ENCODE measurements at regions of chr22 and their contacts with region 1.

Region 1: DNA sequence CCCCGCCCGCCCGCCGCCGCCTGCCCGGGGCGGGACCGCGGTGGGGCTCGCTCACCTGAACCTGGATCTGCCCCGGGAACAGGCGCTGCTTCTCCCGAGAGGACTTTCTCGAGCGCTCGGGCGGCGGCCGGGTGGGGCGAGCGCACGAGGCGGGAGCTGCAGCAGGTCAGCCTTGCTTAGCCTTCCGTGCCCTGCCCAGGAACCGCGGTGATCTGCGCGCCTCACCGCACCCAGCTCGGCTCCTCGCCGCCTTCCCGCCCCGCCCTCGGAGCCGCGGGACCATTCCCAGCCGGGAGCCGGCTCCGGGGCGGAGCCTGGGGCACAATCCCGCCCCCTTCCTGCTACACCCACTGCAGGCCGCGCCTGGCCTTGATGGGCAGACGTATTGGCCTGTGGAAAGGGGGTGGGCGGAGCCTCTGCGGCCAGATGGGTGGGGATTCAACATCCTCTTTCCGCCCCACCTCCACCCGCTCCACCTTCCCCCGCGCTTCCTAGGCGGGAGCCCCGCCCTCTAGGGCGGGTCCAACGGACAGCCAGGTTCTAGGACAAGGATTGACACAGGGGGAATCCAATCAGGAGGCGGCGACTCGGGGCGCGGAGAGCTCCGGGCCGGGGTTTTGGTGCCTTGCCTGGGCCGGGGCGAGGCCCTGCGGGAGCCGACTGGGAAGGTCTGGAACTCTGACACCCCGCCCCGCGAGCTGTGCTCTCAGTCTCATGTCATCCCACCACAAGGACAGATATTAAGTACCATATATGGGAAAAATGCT is at the start of gene MYH9:
- DNase-seq: peak; percentile 100
- H3K4me3 Mint-ChIP-seq: peak within 1 kb of the TSS; percentile 91
- H3K27ac Mint-ChIP-seq: peak within 1 kb of the TSS; percentile 94
- H3K4me1 Mint-ChIP-seq: peaks cover 29% of the 10 kb centered on the region
- H3K27me3 Mint-ChIP-seq: no peaks in the 10 kb centered on the region
- CTCF ChIP-seq: no peak
- total RNA-seq, gene MYH9: 643 and 653 TPM in 2 replicates

Region 2: DNA sequence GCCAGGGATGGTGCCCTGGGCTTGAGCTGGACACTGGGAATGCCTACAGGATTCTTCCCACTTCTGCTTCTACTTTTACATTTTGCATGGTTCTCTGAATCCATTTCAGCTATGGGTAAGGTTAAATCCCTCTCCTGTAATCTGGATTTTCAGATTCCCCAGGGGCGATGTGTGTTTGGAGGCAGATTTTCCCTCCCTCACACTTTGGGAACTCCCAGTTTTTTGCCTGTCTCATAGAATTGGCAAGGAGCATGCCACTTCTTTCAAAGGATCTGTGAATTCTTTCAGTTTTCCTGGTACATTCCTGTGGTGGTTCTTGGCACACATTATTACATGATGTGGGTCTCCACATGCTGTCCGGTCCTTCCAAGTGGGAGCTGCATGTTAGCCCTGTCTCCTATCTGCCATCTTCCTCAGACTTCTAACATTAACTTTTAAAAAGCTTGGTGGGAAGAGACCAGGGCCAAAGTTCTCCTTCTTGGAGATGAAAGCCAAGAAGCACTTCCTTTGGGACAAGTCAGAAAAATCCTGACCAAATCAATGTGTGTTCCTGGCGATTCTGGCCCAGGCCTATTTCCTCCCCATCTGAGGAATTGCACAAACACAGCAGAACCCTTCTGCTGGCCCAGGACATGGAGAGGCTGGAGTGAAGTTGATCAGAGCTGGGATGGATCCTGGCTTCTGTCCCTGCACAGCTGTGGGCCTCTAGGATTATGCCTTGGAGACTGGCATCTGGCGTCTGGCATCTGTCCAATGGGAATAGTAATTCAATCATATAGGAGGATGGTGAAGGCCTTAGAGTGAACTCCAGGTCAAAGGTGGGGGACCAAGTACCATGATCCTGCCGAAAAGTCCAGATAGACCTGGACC is 143.2 kb before region 1 on chr22:
- CTCF ChIA-PET with region 1: no interaction called
- POLR2A ChIA-PET with region 1: no interaction called
- intact Hi-C with region 1: no loop called
- DNase-seq: no peak
- H3K4me3 Mint-ChIP-seq: no peak overlapping the region
- H3K27ac Mint-ChIP-seq: no peak overlapping the region
- H3K4me1 Mint-ChIP-seq: no peaks in the 10 kb centered on the region
- H3K27me3 Mint-ChIP-seq: no peaks in the 10 kb centered on the region
- CTCF ChIP-seq: no peak

Region 3: GRCh38 chr22:36277482-36278291 is 110.2 kb before region 1 on chr22:
- CTCF ChIA-PET with region 1: no interaction called
- POLR2A ChIA-PET with region 1: no interaction called
- intact Hi-C with region 1: no loop called
- DNase-seq: peak; percentile 66
- H3K4me3 Mint-ChIP-seq: no peak overlapping the region
- H3K27ac Mint-ChIP-seq: peak overlapping the region; percentile 19
- H3K4me1 Mint-ChIP-seq: peaks cover 6% of the 10 kb centered on the region
- H3K27me3 Mint-ChIP-seq: no peaks in the 10 kb centered on the region
- CTCF ChIP-seq: peak; percentile 68

Region 4: DNA sequence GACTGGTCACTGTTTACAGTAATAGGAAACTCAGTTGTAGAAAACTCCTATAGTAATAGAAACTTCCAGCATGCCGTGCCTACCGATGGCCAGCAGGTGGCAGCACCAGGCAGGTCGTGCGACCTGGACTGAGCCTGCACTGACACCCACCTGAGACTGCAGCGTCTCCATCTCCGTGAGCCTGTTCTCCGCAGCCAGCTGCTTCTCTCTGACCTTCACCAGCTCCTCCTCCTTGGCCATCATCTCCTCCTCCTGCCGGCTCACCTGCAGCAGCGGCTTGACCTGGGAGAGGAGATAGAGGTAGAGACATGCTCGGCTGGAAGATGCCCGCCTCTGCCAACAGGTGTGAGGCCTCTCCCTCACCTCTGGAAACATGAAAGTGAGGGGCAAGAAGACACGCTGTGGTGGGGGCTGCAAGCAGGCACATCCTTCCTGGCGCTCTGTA is 86.5 kb before region 1 on chr22:
- CTCF ChIA-PET with region 1: interaction called, 6 read pairs
- POLR2A ChIA-PET with region 1: interaction called, 10 read pairs
- intact Hi-C with region 1: loop called (anchors 1 kb)
- DNase-seq: peak; percentile 73
- H3K4me3 Mint-ChIP-seq: no peak overlapping the region
- H3K27ac Mint-ChIP-seq: no peak overlapping the region
- H3K4me1 Mint-ChIP-seq: peaks cover 7% of the 10 kb centered on the region
- H3K27me3 Mint-ChIP-seq: no peaks in the 10 kb centered on the region
- CTCF ChIP-seq: peak; percentile 94

Region 5: DNA sequence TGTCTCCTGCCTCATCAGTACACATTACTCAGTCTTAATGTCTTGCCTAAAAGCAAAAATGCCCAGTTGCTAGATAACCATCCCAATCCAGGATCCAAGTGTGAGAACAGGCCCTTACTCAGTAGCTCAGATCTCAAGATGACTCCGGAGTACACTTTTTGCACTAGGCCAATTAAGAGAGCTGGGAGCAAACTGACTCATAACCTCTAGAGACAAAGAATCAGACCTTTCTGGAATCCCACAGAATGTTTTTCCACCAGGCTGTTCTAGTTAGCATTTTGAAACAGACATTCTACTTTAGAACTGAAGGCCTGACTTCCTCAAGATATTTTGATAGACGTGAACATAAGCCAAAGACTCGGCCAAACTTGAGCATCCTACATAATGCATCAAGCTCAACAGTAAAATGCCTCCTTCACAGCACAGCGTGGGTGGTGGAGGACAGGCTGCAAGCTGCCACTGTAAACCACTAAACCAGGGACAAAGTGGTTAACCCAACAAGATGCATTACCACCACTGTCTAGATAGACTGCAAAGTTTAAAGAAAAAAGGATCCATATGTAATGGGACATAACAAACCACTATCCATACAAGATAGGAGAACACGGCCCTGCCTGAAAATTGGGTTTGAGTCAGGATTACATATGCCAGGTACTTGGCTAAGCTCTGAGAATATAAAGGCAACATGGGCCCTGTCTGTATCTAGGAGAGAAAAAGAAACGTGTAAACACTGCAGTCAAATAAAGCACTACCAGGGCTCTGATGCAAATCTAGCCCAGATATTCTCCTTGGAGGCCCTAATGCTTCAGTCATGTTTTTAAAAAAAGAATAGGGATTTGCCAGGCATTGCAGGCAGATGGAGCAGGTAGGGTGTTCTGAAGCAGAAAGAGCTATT is 48.5 kb before region 1 on chr22:
- CTCF ChIA-PET with region 1: no interaction called
- POLR2A ChIA-PET with region 1: interaction called, 120 read pairs
- intact Hi-C with region 1: no loop called
- DNase-seq: no peak
- H3K4me3 Mint-ChIP-seq: no peak overlapping the region
- H3K27ac Mint-ChIP-seq: peak overlapping the region; percentile 83
- H3K4me1 Mint-ChIP-seq: peaks cover 27% of the 10 kb centered on the region
- H3K27me3 Mint-ChIP-seq: no peaks in the 10 kb centered on the region
- CTCF ChIP-seq: no peak

Region 6: DNA sequence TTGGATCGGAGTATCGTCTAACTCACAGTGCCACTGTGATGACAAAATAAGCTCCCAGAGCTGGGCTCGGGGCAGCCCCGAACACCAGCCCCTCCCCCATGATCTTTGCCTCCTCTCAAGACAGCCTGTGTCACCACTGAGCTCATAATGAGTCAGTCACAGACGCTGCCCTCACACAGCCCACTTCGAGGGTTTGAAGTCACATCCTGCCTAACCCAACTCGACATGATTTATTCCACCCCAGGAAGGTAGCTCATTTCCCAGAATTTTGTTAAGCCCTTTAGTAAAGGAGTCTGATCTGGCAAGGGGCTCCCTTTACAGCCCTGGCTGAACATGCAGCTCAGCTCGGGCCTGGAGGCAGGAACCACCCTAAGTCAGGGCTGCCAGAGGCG is 22.9 kb before region 1 on chr22:
- CTCF ChIA-PET with region 1: interaction called, 3 read pairs
- POLR2A ChIA-PET with region 1: interaction called, 88 read pairs
- intact Hi-C with region 1: loop called (anchors 2 kb)
- DNase-seq: peak; percentile 93
- H3K4me3 Mint-ChIP-seq: peak overlapping the region; percentile 8
- H3K27ac Mint-ChIP-seq: peak overlapping the region; percentile 87
- H3K4me1 Mint-ChIP-seq: peaks cover 54% of the 10 kb centered on the region
- H3K27me3 Mint-ChIP-seq: no peaks in the 10 kb centered on the region
- CTCF ChIP-seq: no peak

Region 7: GRCh38 chr22:36377022-36377631 is 10.8 kb before region 1 on chr22:
- CTCF ChIA-PET with region 1: interaction called, 14 read pairs
- POLR2A ChIA-PET with region 1: interaction called, 88 read pairs
- intact Hi-C with region 1: no loop called
- DNase-seq: no peak
- H3K4me3 Mint-ChIP-seq: no peak overlapping the region
- H3K27ac Mint-ChIP-seq: no peak overlapping the region
- H3K4me1 Mint-ChIP-seq: peaks cover 23% of the 10 kb centered on the region
- H3K27me3 Mint-ChIP-seq: no peaks in the 10 kb centered on the region
- CTCF ChIP-seq: no peak

Region 8: GRCh38 chr22:36415415-36416168 is 27.7 kb after region 1 on chr22:
- CTCF ChIA-PET with region 1: interaction called, 4 read pairs
- POLR2A ChIA-PET with region 1: interaction called, 57 read pairs
- intact Hi-C with region 1: no loop called
- DNase-seq: no peak
- H3K4me3 Mint-ChIP-seq: no peak overlapping the region
- H3K27ac Mint-ChIP-seq: no peak overlapping the region
- H3K4me1 Mint-ChIP-seq: peaks cover under 1% of the 10 kb centered on the region
- H3K27me3 Mint-ChIP-seq: no peaks in the 10 kb centered on the region
- CTCF ChIP-seq: no peak

Region 9: DNA sequence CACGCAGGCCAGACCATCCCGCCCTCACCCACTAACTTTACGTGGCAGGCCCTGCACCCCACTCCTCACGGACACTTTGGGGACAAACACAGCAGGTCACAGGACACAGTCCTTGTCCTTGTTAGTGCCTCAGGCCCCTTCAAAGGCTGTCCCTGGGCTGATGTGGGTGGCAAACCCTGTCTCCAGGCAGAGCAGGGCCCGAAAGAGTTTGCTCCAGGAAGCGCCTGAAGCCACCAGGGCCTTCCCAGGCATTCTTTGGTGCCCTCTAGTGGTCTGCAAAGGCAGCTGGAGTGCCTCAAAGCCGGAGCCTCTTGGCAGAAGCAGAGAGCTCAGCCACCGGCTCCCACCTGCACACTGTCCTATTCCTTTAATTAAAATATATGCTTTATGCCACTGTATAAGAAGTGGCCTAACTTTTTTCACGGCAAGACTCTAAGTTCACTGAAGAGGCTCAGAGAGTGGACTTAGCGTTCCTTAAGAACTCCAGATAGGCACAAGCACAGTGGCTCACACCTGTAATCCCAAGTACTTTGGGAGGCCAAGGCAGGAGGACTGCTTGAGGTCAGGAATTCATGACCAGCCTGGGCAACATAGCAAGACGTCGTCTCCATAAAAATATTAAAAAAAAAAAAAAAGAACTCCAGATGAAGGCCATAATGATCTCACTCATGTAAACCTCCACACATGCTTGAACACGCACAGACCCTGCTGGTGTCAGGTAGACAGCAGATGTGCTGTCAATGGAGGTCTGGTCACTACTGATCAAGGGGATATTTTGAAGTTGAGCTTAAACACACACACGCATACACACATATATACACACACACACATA is 82.4 kb after region 1 on chr22:
- CTCF ChIA-PET with region 1: interaction called, 4 read pairs
- POLR2A ChIA-PET with region 1: interaction called, 100 read pairs
- intact Hi-C with region 1: loop called (anchors 1 kb)
- DNase-seq: peak; percentile 85
- H3K4me3 Mint-ChIP-seq: no peak overlapping the region
- H3K27ac Mint-ChIP-seq: peak overlapping the region; percentile 51
- H3K4me1 Mint-ChIP-seq: peaks cover 48% of the 10 kb centered on the region
- H3K27me3 Mint-ChIP-seq: no peaks in the 10 kb centered on the region
- CTCF ChIP-seq: peak; percentile 91

Region 10: DNA sequence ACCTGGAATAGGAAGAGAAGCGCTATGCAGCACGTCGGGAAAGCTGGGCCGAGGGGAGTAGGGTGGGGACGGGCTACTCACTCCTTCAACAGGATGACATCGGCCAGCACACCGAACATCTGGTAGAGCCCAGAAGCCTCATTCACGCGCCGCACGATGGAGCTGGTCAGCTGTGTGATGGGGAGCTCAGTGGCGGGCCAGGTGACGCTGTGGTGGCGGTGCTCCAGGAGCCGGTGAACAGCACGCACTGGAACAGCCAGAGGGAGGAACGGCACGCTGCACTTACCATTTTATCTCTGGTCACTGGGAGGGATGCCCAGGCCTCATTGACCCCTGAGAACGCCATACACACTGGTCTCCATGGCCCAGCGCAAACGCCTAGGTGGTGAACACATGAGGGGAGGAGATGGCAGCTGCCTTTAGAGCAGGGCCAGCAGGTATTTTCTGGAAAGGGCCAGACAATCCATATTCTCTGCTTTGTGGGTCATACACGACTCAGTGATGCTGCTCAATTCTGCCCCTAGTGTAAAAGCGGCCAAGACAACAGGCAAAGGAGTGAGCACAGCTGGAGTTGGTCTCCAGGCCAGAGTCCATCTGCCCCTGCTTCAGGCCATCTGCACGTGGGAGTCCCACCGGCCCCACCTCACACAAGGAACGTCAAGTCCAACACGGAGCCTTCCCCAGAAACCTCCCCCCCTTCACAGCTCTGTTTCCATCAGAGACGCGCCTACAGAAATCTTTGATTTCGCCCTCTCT is 110.2 kb after region 1 on chr22:
- CTCF ChIA-PET with region 1: no interaction called
- POLR2A ChIA-PET with region 1: no interaction called
- intact Hi-C with region 1: no loop called
- DNase-seq: no peak
- H3K4me3 Mint-ChIP-seq: no peak overlapping the region
- H3K27ac Mint-ChIP-seq: no peak overlapping the region
- H3K4me1 Mint-ChIP-seq: no peaks in the 10 kb centered on the region
- H3K27me3 Mint-ChIP-seq: no peaks in the 10 kb centered on the region
- CTCF ChIP-seq: peak; percentile 7

Region 11: DNA sequence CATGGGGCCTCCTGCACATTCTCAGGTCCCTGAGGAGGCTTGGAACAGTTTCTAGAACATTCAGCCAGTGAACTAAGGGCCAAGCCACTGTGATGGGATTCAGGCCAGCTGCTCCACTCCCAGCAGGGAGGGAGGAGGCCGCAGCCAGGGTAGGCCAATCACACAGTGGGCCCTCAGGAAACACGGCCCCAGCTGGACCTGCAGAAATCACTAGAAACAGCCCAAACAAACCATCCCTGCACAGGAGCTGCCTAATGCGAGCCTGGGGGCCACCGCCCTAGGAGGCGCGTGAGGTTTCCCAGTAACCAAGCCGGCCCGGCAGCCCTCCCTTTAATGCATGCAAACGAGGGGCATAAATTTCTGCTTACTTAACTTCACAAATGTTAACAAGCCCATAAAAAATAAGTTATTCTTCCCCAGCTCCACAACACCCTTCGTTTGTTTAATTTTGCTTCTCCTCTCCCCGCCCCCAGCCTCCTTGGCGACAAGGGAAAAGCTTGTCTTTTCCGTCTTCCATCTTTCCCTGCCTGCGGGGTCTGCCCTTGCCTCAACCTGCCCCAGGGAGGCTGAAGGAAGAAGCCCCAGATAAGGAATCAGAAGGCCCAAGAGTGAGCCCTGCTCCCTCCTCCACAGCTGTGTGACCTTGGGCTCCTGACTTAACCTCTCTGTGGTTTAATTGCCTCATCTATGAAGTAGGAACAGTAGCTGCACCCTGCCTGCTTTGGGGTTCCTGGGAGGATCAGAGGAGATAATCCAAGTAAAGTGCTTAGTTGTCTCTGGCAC is 1013.7 kb after region 1 on chr22:
- CTCF ChIA-PET with region 1: no interaction called
- POLR2A ChIA-PET with region 1: no interaction called
- intact Hi-C with region 1: no loop called
- DNase-seq: no peak
- H3K4me3 Mint-ChIP-seq: no peak overlapping the region
- H3K27ac Mint-ChIP-seq: no peak overlapping the region
- H3K4me1 Mint-ChIP-seq: peaks cover 2% of the 10 kb centered on the region
- H3K27me3 Mint-ChIP-seq: no peaks in the 10 kb centered on the region
- CTCF ChIP-seq: no peak

Measured in MCF 10A (cell line).